Ascending aorta (tissue), 2 donors: ENCODE measurements at regions of chr9 and their contacts with region 1.

Region 1: GRCh38 chr9:131714161-131714646 is 25.7 kb downstream of the RAPGEF1 start:
- DNase-seq: peak; percentile 70 to 92
- H3K4me3 ChIP-seq: peak overlapping the region in 1 of 2 donors; percentile 49
- H3K27ac ChIP-seq: peak overlapping the region; percentile 80 to 89
- H3K4me1 ChIP-seq: peaks cover 0 to 46% of the 10 kb centered on the region in 2 donors
- H3K27me3 ChIP-seq: no peaks in the 10 kb centered on the region
- CTCF ChIP-seq: no peak

Region 2: GRCh38 chr9:131608493-131609037 is 105.6 kb before region 1 on chr9:
- intact Hi-C with region 1: loop called (anchors 2 kb)
- DNase-seq: peak; percentile 36 to 92
- H3K4me3 ChIP-seq: peak overlapping the region in 1 of 2 donors; percentile 49
- H3K27ac ChIP-seq: peak overlapping the region; percentile 76 to 91
- H3K4me1 ChIP-seq: peaks cover 12 to 43% of the 10 kb centered on the region in 2 donors
- H3K27me3 ChIP-seq: no peaks in the 10 kb centered on the region
- CTCF ChIP-seq: no peak

Region 3: GRCh38 chr9:131678499-131679111 is 35.6 kb before region 1 on chr9:
- intact Hi-C with region 1: loop called (anchors 1 kb)
- DNase-seq: peak; percentile 85 to 93
- H3K4me3 ChIP-seq: no peak overlapping the region
- H3K27ac ChIP-seq: peak overlapping the region; percentile 93 to 96
- H3K4me1 ChIP-seq: peaks cover 34 to 80% of the 10 kb centered on the region in 2 donors
- H3K27me3 ChIP-seq: no peaks in the 10 kb centered on the region
- CTCF ChIP-seq: no peak

Region 4: GRCh38 chr9:131733541-131734061 is 19.4 kb after region 1 on chr9:
- intact Hi-C with region 1: loop called (anchors 2 kb)
- DNase-seq: peak in 1 of 2 donors; percentile 85
- H3K4me3 ChIP-seq: no peak overlapping the region
- H3K27ac ChIP-seq: peak overlapping the region; percentile 80 to 83
- H3K4me1 ChIP-seq: peaks cover 6 to 53% of the 10 kb centered on the region in 2 donors
- H3K27me3 ChIP-seq: no peaks in the 10 kb centered on the region
- CTCF ChIP-seq: no peak

Region 5: DNA sequence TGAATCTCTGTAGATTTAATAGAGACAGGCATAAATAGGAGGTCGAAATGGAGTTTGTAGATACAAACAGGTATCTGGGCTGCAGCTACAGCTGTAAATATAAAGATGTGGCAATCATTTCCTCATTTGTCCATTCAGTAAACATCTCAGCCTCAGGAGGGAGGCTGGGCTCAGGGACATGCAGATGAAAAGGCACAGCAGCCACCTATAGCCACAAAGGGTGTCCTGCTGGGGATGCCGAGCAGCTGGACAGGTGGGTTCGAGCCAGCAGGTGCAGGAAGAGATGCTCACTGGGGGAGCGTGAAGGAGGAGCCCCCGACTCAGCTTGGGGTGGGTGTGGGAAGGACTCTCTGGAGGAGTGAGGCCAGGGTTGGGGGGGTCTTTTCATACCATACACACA is 74.1 kb after region 1 on chr9:
- intact Hi-C with region 1: no loop called
- DNase-seq: no peak
- H3K4me3 ChIP-seq: no peak overlapping the region
- H3K27ac ChIP-seq: no peak overlapping the region
- H3K4me1 ChIP-seq: no peaks in the 10 kb centered on the region
- H3K27me3 ChIP-seq: no peaks in the 10 kb centered on the region
- CTCF ChIP-seq: no peak

Region 6: DNA sequence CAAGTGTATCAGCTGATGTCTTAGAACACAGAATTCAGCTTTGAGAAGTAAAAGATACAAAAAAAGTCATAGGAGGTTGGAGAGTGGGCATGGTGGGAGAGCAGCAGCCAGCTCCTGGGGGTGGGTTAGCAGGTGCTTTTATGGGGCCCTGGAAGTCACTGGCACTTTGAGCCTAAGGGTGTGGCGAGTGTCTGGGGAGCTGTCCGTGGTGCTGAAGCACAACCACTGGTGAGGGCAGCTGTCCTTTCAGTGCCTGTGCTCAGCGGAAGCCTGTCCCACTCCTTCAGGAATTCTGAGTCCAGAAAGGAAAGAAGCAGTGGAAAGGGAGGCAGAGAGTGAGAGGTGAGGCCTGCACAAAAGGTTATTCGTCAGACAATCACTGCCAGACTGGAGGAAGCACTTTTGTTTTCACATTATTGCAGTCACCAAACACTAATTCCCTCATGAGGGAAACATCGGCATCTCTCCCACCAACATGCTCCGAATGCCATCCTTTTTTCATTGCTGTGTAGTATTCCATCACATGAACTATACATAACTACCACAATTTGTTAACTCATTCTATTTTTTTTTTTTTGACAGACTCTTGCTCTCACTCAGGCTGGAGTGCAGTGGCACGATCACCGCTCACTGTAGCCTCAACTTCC is 85.1 kb after region 1 on chr9:
- intact Hi-C with region 1: no loop called
- DNase-seq: no peak
- H3K4me3 ChIP-seq: no peak overlapping the region
- H3K27ac ChIP-seq: no peak overlapping the region
- H3K4me1 ChIP-seq: no peaks in the 10 kb centered on the region
- H3K27me3 ChIP-seq: no peaks in the 10 kb centered on the region
- CTCF ChIP-seq: no peak